ENCODE measurements at regions of chr6 and their contacts with region 1.

Region 1: DNA sequence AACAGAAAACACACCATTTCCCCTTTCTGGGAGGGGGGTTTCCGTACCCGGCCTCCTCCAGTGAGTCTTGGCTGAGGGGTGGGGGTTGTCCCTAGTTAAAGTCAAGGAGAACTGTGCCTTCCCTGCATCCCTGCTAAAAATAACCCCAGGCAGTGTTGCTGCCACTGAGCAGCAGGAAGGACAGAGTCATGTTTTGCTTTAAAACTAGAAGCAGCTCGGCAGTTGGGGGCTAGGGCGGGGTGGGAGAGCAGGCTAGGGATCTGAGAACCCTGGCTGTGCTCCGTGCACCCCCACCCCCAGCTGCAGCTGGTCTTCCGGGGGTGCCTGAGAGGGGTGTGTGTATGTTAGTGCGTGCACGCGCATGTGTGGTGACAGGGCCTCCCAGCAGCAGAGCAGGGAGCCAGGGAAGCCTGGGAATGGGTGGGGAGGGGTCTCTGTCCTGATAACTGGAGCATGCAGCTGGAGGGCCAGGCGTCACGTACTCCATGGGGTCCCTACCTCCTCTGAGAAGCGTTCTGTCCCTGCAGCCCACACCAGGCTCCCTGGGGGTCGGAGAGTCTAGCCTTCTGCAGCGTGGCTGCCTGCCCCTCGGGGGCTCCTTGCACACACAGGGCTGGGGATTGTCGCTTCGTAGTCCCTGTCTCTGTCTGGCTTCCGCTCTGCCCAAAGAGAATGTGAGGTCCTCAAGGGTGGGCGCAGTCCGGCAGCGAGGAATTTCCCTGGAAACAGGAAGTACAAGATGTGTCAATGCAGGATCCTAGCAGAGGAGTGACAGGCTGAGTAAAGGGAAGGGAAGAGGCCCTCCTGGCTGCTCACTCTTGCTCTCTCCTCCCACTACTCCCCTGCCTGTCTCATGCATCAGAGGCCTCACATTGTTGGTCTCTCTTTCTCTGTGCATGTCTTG is 16.8 kb upstream of the ARMC12 start:
- DNase-seq: peak; percentile 49 to 73 (median 66)
- ATAC-seq: peak; percentile 52 to 83 (median 74)
- H3K4me3 ChIP-seq: peak overlapping the region in 9 of 12 donors; percentile 13 to 49 (median 37)
- H3K27ac ChIP-seq: peak overlapping the region; percentile 67 to 100 (median 82)
- H3K4me1 ChIP-seq: peaks cover 19 to 80% (median 37%) of the 10 kb centered on the region in 12 donors
- H3K27me3 ChIP-seq: no peaks in the 10 kb centered on the region
- CTCF ChIP-seq: no peak
- POLR2A ChIP-seq: peak in 1 of 2 donors; percentile 31

Region 2: DNA sequence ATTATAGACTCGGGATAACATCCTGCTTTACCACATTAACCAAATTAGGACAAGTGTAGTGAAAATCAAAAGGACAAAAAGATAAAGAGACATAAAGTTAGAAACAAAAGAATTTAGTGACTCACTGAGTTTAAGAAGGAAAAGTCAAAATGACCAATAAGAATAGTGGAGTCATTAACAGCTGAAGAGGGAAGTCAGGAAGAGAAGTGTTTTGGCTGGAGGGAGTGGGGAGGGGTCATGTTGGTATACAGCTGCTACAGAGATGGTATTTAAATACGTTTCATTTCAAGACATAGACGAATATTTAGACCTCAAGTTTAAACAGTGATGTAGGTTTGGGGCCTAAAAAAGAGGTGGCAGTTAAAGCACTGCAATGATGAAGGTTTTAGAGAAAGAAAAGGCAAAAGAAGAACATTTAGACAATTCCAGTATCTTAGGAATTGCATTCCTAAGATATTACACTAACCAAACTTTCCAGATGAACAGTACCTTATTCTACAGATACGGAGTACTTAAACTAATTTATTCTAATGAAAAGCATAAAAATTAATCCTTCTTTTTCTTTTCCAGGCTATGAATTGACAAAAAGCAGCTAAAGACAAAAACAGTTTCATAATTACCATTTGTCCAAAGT is 41.9 kb before region 1 on chr6:
- intact Hi-C with region 1: no loop called
- DNase-seq: no peak
- ATAC-seq: no peak
- H3K4me3 ChIP-seq: no peak overlapping the region
- H3K27ac ChIP-seq: peak overlapping the region in 2 of 12 donors; percentile 15 to 64
- H3K4me1 ChIP-seq: peaks cover 0 to 95% (median 12%) of the 10 kb centered on the region in 12 donors
- H3K27me3 ChIP-seq: no peaks in the 10 kb centered on the region
- CTCF ChIP-seq: no peak
- POLR2A ChIP-seq: no peak

Region 3: DNA sequence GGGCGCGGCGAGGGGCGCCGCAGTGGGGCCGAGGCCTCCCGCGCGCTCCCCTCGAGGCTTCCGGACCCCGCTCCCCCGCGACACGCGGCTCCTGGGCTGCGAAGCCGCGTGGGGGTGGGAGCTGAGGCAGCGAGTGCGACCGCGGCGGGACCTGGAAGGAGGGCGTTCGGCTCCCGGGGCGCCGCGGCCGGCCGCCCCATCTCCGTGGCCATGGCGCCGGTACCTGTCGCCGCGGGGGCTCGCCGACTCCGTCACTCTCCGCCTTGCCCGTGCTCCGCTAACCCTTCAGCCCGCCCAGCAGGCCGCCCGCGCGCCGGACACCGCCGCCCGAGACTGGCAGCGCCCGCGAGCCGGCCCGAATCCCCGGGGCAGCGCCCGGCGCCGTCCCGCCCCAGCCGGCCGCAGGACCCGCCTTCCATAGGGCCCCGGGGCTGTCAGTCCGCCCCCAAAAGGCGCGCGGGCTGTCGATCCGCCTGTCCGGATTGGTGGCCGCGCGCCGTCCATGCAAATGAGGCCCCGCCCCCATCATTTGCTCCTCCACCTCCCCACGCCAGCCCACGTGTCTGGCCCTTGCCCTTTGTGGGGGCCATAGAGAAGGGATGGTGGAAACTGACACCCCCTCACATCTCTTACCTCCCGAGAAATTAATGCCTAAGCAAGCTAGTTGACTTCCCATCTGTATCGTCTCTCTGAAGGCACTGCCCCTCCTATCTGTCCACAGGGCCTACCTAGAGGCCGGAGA is 31.3 kb before region 1 on chr6 and contains the start of gene FKBP5:
- intact Hi-C with region 1: loop called in 3 of 10 experiments (anchors 1 to 5 kb)
- DNase-seq: peak; percentile 97 to 98 (median 98)
- ATAC-seq: peak; percentile 85 to 96 (median 94)
- H3K4me3 ChIP-seq: peak within 1 kb of the TSS; percentile 83 to 100 (median 91)
- H3K27ac ChIP-seq: peak within 1 kb of the TSS; percentile 85 to 99 (median 94)
- H3K4me1 ChIP-seq: peaks cover 0 to 67% (median 22%) of the 10 kb centered on the region in 12 donors
- H3K27me3 ChIP-seq: no peaks in the 10 kb centered on the region
- CTCF ChIP-seq: no peak
- POLR2A ChIP-seq: peak; percentile 99
- total RNA-seq, gene FKBP5: 19.7 to 175 (median 104) TPM

Region 4: DNA sequence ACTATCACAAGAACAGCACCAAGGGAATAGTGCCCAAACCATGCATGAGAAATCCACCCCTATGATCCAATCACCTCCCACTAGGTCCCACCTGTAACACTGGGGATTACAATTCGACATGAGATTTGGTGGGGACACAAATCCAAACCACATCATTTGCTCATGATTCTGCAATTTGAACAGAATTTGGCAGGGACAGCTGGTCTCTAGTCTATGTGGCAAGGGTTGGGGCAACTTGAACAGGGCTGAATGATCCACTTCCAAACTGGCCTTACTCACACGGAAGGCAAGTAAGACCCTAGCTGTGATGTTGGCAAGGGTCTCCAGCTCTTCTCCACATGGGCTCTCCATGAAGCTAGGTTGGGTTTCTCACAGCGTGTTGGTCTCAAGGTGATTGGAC is 21.2 kb before region 1 on chr6:
- intact Hi-C with region 1: loop called in 2 of 10 experiments (anchors 2 to 5 kb)
- DNase-seq: no peak
- ATAC-seq: no peak
- H3K4me3 ChIP-seq: no peak overlapping the region
- H3K27ac ChIP-seq: no peak overlapping the region
- H3K4me1 ChIP-seq: no peaks in the 10 kb centered on the region
- H3K27me3 ChIP-seq: no peaks in the 10 kb centered on the region
- CTCF ChIP-seq: no peak
- POLR2A ChIP-seq: no peak

Measured in heart left ventricle (tissue), 16 donors.